ENCODE measurements at regions of chr2 and their contacts with region 1.

Region 1: GRCh38 chr2:154776825-154777224 is 78.3 kb downstream of the KCNJ3 start:
- DNase-seq: no peak
- ATAC-seq: no peak
- H3K4me3 ChIP-seq: no peak overlapping the region
- H3K27ac ChIP-seq: no peak overlapping the region
- H3K4me1 ChIP-seq: no peaks in the 10 kb centered on the region
- H3K27me3 ChIP-seq: no peaks in the 10 kb centered on the region
- CTCF ChIP-seq: no peak

Region 2: GRCh38 chr2:154713650-154714049 is 63.2 kb before region 1 on chr2:
- CTCF ChIA-PET with region 1: no interaction called
- POLR2A ChIA-PET with region 1: no interaction called
- intact Hi-C with region 1: loop called (anchors 10 kb)
- DNase-seq: no peak
- ATAC-seq: no peak
- H3K4me3 ChIP-seq: no peak overlapping the region
- H3K27ac ChIP-seq: no peak overlapping the region
- H3K4me1 ChIP-seq: no peaks in the 10 kb centered on the region
- H3K27me3 ChIP-seq: no peaks in the 10 kb centered on the region
- CTCF ChIP-seq: no peak

Measured in PC-3 (cell line).